Lower lobe of right lung (tissue), 2 donors: ENCODE measurements at regions of chr9 and their contacts with region 1.

Region 1: DNA sequence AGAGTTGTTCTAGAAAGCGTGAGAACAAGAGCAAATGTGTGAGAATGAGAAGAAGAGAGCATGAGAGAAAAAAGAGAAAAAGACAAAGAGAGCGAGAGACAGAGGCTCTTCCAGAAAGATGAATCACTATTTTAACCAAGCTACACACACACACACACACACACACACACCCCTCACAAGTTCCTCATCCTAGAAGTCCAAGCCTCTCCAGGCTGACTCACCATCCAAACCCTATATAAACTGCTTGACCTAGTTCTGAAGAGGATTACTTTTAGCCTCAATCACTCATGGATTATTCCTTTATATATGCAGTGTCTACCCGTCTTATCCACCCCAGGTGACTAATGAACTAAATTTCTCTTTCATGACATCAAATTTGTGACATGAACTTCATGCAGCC is 37.6 kb downstream of the C9orf57 start:
- DNase-seq: no peak
- ATAC-seq: peak; percentile 67 to 71
- H3K4me3 ChIP-seq: no peak overlapping the region
- H3K27ac ChIP-seq: no peak overlapping the region
- H3K4me1 ChIP-seq: no peaks in the 10 kb centered on the region
- H3K27me3 ChIP-seq: no peaks in the 10 kb centered on the region
- CTCF ChIP-seq: no peak

Region 2: DNA sequence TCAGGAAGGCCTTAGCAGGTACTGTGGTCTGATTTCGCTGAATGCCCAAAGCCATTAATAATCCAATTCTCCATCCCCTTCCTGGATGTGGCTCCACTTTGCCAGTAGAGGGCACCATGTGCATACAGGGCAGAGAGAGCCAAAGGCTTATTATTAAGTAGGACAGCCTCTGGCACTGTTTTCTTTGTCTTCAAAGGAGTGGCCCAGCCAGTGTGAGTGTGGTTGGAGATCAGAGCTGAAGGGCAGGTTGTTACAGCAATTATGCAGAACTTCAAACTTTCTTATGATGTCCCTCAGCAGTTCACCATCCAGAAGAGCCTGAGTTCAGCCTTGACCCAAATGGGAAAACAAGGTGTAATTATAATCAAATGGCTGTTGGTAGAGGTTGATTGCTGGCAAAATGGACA is 215.9 kb before region 1 on chr9:
- intact Hi-C with region 1: loop called (anchors 10 kb)
- DNase-seq: peak; percentile 61
- ATAC-seq: peak; percentile 96 to 97
- H3K4me3 ChIP-seq: no peak overlapping the region
- H3K27ac ChIP-seq: no peak overlapping the region
- H3K4me1 ChIP-seq: peaks cover 8% of the 10 kb centered on the region
- H3K27me3 ChIP-seq: no peaks in the 10 kb centered on the region
- CTCF ChIP-seq: peak; percentile 90